ENCODE measurements at regions of chr2 and their contacts with region 1.

Region 1: DNA sequence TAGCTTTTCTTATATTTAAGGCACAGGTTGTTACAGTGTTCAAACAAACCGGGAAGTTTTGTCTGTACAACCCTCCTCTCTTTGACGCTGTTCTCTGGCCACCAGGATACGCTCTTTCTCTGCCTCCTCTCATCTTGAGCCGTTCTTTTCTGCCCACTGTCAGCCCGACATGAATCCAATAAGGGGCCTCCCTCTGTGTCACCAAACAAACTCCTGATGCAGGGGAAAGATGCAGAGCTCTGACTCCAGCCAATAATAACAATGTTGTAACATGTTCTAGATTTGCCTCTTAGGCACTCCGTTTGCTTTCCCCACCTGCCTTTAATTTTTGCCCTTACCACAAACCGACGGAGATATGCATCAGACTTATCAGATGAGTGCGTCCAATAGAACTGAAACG is 449.3 kb downstream of the SLC4A3 start:
- DNase-seq: peak in 1 of 2 donors; percentile 50
- ATAC-seq: peak; percentile 79
- H3K4me3 ChIP-seq: no peak overlapping the region
- H3K27ac ChIP-seq: peak overlapping the region; percentile 6 to 59
- H3K4me1 ChIP-seq: peaks cover 0 to 5% of the 10 kb centered on the region in 2 donors
- H3K27me3 ChIP-seq: no peaks in the 10 kb centered on the region

Region 2: GRCh38 chr2:219886615-219887014 is 190.1 kb before region 1 on chr2:
- intact Hi-C with region 1: no loop called
- DNase-seq: no peak
- ATAC-seq: no peak
- H3K4me3 ChIP-seq: no peak overlapping the region
- H3K27ac ChIP-seq: no peak overlapping the region
- H3K4me1 ChIP-seq: no peaks in the 10 kb centered on the region
- H3K27me3 ChIP-seq: no peaks in the 10 kb centered on the region

Region 3: GRCh38 chr2:220228299-220229006 is 151.7 kb after region 1 on chr2:
- intact Hi-C with region 1: loop called in 1 of 2 experiments (anchors 10 kb)
- DNase-seq: no peak
- ATAC-seq: peak; percentile 69
- H3K4me3 ChIP-seq: no peak overlapping the region
- H3K27ac ChIP-seq: no peak overlapping the region
- H3K4me1 ChIP-seq: no peaks in the 10 kb centered on the region
- H3K27me3 ChIP-seq: no peaks in the 10 kb centered on the region

Region 4: DNA sequence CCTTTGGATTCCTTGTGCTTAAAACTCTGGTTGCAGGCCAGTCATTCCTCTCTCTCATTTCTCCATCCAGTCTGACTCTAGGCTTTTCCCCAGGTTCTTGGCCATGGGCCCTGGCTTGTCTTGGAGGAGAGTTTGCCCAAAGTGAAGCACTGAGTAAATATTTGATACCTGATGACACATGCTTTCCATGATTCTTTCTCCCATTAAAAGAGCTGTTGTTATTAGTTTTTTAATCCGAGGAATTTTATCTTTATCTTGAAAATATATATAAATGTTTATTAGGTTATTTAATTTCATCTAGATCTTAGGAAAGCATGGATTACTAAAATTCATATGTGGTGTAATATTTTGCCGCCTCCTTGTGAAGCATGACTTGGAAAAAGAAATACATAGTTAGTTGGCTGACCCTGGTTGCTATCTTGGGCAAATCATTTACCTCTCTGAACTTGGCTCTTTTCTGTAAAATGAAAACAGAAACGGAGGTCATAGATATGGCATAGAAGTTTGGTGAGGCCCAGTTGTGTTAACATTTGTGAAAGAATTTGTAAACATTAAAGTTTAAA is 200.8 kb after region 1 on chr2:
- intact Hi-C with region 1: loop called in 1 of 2 experiments (anchors 5 kb)
- DNase-seq: peak; percentile 84 to 89
- ATAC-seq: peak; percentile 81
- H3K4me3 ChIP-seq: no peak overlapping the region
- H3K27ac ChIP-seq: peak overlapping the region in 1 of 2 donors; percentile 87
- H3K4me1 ChIP-seq: no peaks in the 10 kb centered on the region
- H3K27me3 ChIP-seq: no peaks in the 10 kb centered on the region

Measured in aorta (tissue), 5 donors.